ENCODE measurements at regions of chr1 and their contacts with region 1.

Region 1: DNA sequence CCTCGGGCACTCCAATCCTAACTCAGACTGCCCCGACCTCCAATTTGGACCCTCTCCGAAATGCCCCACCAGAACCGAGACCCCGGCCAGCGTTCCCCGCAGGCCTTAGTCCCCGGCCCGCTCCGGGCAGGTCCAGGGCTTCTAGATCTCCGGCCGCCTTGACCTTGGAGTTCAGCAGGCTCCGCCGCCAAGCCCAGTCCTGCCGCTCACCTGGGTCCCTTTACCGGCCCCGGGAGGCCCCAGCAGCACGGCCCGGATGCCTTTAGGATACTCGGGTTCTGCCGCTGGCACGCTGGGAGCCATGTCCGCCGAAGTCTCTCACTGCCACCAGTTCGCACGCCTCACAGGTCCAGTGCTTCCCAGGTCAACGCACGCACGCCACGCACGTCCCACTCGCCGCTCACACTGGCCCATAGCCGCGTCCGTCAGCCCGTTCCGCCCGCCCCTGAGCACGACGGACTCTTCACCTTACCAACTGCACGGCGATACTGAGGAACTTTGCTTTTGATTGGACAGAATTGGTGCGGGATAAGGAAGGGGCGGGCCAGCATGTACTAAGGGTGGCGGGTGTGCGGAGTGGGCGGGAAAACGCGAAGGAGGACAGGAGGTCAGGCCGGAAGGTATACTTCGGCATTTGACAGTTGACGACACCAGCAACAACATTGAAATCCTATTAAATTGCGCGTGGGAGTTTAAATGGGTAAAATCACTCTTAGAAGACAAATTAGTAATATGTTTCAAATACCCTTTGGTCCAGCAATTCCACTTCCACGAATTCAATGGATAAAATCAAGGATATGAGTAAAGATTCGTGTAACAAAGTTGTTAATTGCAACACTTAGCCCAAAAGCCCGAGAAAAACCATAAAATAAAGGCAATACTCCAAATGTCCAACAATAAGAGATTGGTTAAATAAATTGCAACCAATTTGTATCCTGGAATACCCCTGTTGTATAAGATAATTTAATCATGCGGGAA is at the start of gene AK2:
- DNase-seq: peak; percentile 84
- ATAC-seq: peak; percentile 99
- H3K4me3 Mint-ChIP-seq: peak within 1 kb of the TSS; percentile 97
- H3K27ac Mint-ChIP-seq: peak within 1 kb of the TSS; percentile 84
- H3K4me1 Mint-ChIP-seq: peaks cover 46% of the 10 kb centered on the region
- H3K27me3 Mint-ChIP-seq: no peaks in the 10 kb centered on the region
- CTCF ChIP-seq: no peak
- total RNA-seq, gene AK2: 156 and 162 TPM in 2 replicates

Region 2: DNA sequence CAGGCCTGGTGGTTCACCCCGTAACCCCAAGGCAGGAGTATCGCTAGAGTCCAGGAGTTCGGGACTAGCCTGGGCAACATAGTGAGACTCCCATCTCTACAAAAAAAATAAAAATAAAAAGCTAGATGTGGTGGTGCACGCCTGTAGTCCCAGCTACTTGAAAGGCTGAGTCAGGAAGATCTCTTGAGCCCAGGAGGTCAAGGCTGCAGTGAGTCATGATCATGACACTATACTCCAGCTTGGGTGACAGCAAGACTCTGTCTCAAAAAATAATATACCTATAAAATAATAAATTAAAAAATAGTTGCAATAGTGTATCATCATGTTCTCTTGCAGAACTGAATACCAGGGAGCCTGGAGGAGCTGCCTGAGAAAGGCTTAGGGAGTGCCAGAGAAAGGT is 983.9 kb before region 1 on chr1:
- CTCF ChIA-PET with region 1: no interaction called
- POLR2A ChIA-PET with region 1: interaction called, 10 read pairs
- intact Hi-C with region 1: no loop called
- DNase-seq: no peak
- ATAC-seq: no peak
- H3K4me3 Mint-ChIP-seq: no peak overlapping the region
- H3K27ac Mint-ChIP-seq: no peak overlapping the region
- H3K4me1 Mint-ChIP-seq: peaks cover 2% of the 10 kb centered on the region
- H3K27me3 Mint-ChIP-seq: no peaks in the 10 kb centered on the region
- CTCF ChIP-seq: no peak

Region 3: GRCh38 chr1:32786856-32787255 is 250.0 kb before region 1 on chr1:
- CTCF ChIA-PET with region 1: no interaction called
- POLR2A ChIA-PET with region 1: no interaction called
- intact Hi-C with region 1: no loop called
- DNase-seq: no peak
- ATAC-seq: no peak
- H3K4me3 Mint-ChIP-seq: no peak overlapping the region
- H3K27ac Mint-ChIP-seq: no peak overlapping the region
- H3K4me1 Mint-ChIP-seq: peaks cover 2% of the 10 kb centered on the region
- H3K27me3 Mint-ChIP-seq: no peaks in the 10 kb centered on the region
- CTCF ChIP-seq: no peak

Region 4: DNA sequence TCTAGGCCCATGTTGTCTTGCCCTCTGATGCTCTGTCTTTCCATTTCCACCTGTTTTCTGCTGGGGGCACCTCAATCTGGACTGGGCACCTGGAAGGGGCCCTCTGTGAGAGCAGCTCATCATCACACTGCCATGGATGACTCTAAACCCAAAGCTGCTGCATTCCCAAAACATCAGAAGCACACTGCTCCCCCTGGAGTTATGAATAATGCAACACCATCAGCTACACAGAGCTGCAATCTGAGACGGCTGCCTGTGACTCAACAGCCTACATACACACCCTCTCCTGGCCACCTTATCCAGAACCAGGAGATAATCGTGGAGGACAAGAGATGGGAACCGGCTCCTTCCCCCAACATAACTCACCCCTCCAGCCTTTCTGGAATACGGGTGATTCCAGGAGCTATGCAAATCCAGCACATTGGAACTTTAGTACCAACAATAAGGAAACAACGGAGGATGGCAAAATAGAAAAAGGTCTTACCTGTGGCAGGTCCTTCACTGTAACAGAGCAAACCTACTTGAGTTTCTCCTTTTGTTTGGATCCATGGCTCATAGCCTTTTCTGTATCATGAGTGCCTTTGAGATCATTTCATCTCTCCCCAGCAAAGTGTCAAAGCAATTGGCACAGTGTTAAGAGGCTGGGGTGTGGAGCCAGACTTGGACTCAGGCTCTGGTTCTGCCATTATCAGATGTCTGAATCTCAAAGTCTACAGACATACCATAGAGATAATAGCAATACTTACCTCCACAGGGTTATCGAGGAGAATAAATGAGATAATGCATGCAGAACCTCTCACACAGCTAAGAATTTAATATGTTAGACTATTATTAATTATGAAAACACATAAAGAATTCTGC is 29.4 kb before region 1 on chr1:
- CTCF ChIA-PET with region 1: no interaction called
- POLR2A ChIA-PET with region 1: no interaction called
- intact Hi-C with region 1: no loop called
- DNase-seq: no peak
- ATAC-seq: peak; percentile 76
- H3K4me3 Mint-ChIP-seq: no peak overlapping the region
- H3K27ac Mint-ChIP-seq: no peak overlapping the region
- H3K4me1 Mint-ChIP-seq: no peaks in the 10 kb centered on the region
- H3K27me3 Mint-ChIP-seq: no peaks in the 10 kb centered on the region
- CTCF ChIP-seq: no peak

Region 5: GRCh38 chr1:33080885-33081553 is 44.2 kb after region 1 on chr1 and contains the start of gene AZIN2:
- CTCF ChIA-PET with region 1: no interaction called
- POLR2A ChIA-PET with region 1: no interaction called
- intact Hi-C with region 1: loop called (anchors 10 kb)
- DNase-seq: peak; percentile 94
- ATAC-seq: peak; percentile 99
- H3K4me3 Mint-ChIP-seq: peak within 1 kb of the TSS; percentile 82
- H3K27ac Mint-ChIP-seq: no peak within 1 kb of the TSS
- H3K4me1 Mint-ChIP-seq: peaks cover 17% of the 10 kb centered on the region
- H3K27me3 Mint-ChIP-seq: peaks cover 3% of the 10 kb centered on the region
- CTCF ChIP-seq: no peak
- total RNA-seq, gene AZIN2: 0.82 and 0.93 TPM in 2 replicates